ENCODE measurements at regions of chr17 and their contacts with region 1.

Region 1: DNA sequence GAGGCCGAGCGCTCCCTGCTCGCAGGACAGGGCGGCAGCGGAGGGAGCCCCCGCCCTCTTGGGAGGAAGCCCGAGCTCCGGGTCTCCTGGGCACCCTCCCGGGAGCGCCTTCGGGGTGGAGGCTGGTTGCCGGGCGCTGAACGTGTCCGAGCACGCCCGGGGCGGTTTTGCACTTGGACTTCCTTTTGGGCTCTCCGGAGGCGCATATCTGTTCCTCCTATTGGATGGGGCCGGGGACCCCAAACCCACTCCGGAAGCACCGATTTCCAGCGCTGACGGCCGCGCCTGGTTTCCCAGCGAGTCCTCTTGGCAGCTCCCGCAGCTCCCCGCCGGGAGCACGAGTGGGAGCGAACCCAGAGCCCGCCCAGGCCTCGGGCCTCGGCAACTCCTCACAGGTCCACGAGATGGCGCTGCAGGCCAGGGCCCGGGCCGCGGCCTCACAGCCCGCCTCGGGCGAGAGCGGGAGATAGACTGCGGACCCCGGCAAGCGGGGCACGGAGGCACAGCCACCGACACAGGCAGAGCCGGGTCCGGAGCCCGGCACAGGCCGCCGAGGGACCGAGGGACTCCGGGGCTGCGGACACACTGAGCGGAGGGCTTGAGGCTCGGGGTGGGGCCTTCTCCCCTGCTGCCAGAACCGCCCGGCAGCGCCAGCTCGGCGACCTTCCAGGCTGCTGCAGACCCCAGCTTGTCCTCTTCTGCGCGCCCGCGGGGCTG is 12.7 kb downstream of the TBX2 start:
- DNase-seq: no peak
- H3K4me3 ChIP-seq: peak overlapping the region; percentile 60
- CTCF ChIP-seq: peak; percentile 95

Region 2: DNA sequence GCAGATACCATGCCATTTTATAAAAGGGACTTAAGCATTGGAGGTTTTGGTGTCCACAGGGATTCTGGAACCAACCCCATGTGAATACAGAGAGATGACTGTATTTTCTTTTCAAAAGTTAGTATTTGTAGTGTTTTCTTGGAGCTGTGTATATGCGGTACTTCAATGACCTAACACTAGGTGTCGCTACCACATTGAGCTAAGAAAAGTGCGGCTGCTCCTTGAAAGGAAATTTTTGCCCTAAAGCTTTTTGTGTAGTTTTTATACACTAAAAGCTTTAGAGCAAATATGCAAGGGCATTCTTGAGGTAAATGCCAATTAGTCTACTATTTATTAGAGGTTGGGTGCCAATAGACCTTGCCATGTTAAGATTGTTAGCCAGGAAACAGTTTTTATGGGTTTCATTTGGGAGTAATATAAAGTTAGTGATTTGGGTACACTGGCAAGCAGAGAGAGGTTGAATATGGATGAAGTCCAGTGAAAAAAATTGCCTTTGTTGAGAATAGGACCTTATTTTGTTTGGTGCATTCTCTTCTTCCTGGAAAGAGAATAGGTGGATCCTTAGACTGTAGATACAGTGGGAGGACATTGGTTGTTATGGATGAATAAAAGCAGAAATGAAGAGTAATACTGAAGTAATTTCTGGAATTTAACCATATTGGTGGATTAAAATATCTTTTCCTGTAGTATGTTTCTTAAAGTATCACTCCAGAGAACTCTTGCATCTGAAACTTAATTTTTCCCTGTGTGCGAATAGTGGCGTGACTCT is 691.4 kb before region 1 on chr17:
- CTCF ChIA-PET with region 1: interaction called, 10 read pairs
- POLR2A ChIA-PET with region 1: no interaction called
- DNase-seq: peak; percentile 37
- H3K4me3 ChIP-seq: no peak overlapping the region
- CTCF ChIP-seq: peak; percentile 74

Region 3: DNA sequence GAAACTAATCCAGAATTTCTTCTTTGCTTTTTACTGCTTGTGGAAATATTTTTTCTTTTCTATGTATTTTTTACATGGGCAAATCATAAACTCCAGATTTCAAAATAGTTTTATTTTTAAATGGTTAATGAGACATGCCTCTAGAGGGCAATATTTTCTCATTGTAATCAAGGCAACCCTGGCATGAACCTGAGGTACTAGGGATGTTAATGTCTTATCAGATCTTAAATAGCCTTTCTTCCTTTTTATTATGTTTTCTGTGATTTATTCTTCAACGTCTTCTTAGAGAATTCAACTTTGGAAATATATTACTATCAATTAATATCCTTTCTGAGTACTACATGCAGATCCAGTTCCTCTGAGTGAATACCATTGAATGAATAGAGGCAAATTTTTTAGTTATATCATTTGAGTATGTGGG is 410.0 kb before region 1 on chr17:
- CTCF ChIA-PET with region 1: interaction called, 55 read pairs
- POLR2A ChIA-PET with region 1: no interaction called
- DNase-seq: no peak
- H3K4me3 ChIP-seq: no peak overlapping the region
- CTCF ChIP-seq: peak; percentile 7

Region 4: GRCh38 chr17:61338000-61338798 is 74.1 kb before region 1 on chr17:
- CTCF ChIA-PET with region 1: no interaction called
- POLR2A ChIA-PET with region 1: no interaction called
- DNase-seq: peak; percentile 46
- H3K4me3 ChIP-seq: no peak overlapping the region
- CTCF ChIP-seq: no peak

Region 5: GRCh38 chr17:61426013-61426730 is 13.9 kb after region 1 on chr17:
- CTCF ChIA-PET with region 1: interaction called, 82 read pairs
- POLR2A ChIA-PET with region 1: no interaction called
- DNase-seq: no peak
- H3K4me3 ChIP-seq: no peak overlapping the region
- CTCF ChIP-seq: peak; percentile 4

Region 6: GRCh38 chr17:61556224-61557188 is 144.2 kb after region 1 on chr17:
- CTCF ChIA-PET with region 1: interaction called, 188 read pairs
- POLR2A ChIA-PET with region 1: no interaction called
- DNase-seq: no peak
- H3K4me3 ChIP-seq: no peak overlapping the region
- CTCF ChIP-seq: no peak

Region 7: GRCh38 chr17:61583242-61583641 is 170.9 kb after region 1 on chr17:
- CTCF ChIA-PET with region 1: interaction called, 241 read pairs
- POLR2A ChIA-PET with region 1: interaction called, 3 read pairs
- DNase-seq: peak; percentile 16
- H3K4me3 ChIP-seq: no peak overlapping the region
- CTCF ChIP-seq: peak; percentile 25

Region 8: GRCh38 chr17:61837175-61838051 is 425.1 kb after region 1 on chr17:
- CTCF ChIA-PET with region 1: interaction called, 23 read pairs
- POLR2A ChIA-PET with region 1: interaction called, 3 read pairs
- DNase-seq: no peak
- H3K4me3 ChIP-seq: no peak overlapping the region
- CTCF ChIP-seq: peak; percentile 67

Measured in AG04449 (cell line).